Mammary epithelial cell (primary cell): ENCODE measurements at regions of chr3 and their contacts with region 1.

Region 1: GRCh38 chr3:16600780-16601539 is 4.3 kb downstream of the DAZL start:
- DNase-seq: peak; percentile 37
- H3K4me3 ChIP-seq: no peak overlapping the region
- H3K27ac ChIP-seq: no peak overlapping the region
- H3K4me1 ChIP-seq: no peaks in the 10 kb centered on the region
- H3K27me3 ChIP-seq: no peaks in the 10 kb centered on the region
- CTCF ChIP-seq: peak; percentile 73 to 76

Region 2: GRCh38 chr3:16618721-16619120 is 17.8 kb after region 1 on chr3:
- CTCF ChIA-PET with region 1: no interaction called
- dilution Hi-C with region 1: no loop called
- in situ Hi-C with region 1: no loop called
- intact Hi-C with region 1: no loop called
- DNase-seq: peak; percentile 14
- H3K4me3 ChIP-seq: no peak overlapping the region
- H3K27ac ChIP-seq: no peak overlapping the region
- H3K4me1 ChIP-seq: no peaks in the 10 kb centered on the region
- H3K27me3 ChIP-seq: peaks cover 4% of the 10 kb centered on the region
- CTCF ChIP-seq: no peak

Region 3: GRCh38 chr3:16801698-16802097 is 200.7 kb after region 1 on chr3:
- CTCF ChIA-PET with region 1: no interaction called
- dilution Hi-C with region 1: no loop called
- in situ Hi-C with region 1: no loop called
- intact Hi-C with region 1: loop called (anchors 10 kb)
- DNase-seq: no peak
- H3K4me3 ChIP-seq: no peak overlapping the region
- H3K27ac ChIP-seq: no peak overlapping the region
- H3K4me1 ChIP-seq: no peaks in the 10 kb centered on the region
- H3K27me3 ChIP-seq: no peaks in the 10 kb centered on the region
- CTCF ChIP-seq: no peak

Region 4: GRCh38 chr3:17227472-17227871 is 626.5 kb after region 1 on chr3:
- CTCF ChIA-PET with region 1: no interaction called
- dilution Hi-C with region 1: loop called (anchors 10 kb)
- in situ Hi-C with region 1: loop called (anchors 10 to 25 kb)
- intact Hi-C with region 1: no loop called
- DNase-seq: no peak
- H3K4me3 ChIP-seq: no peak overlapping the region
- H3K27ac ChIP-seq: no peak overlapping the region
- H3K4me1 ChIP-seq: no peaks in the 10 kb centered on the region
- H3K27me3 ChIP-seq: no peaks in the 10 kb centered on the region
- CTCF ChIP-seq: no peak

Region 5: GRCh38 chr3:17412950-17413530 is 812.1 kb after region 1 on chr3:
- CTCF ChIA-PET with region 1: no interaction called
- dilution Hi-C with region 1: no loop called
- in situ Hi-C with region 1: loop called (anchors 25 kb)
- intact Hi-C with region 1: loop called (anchors 1 kb)
- DNase-seq: peak; percentile 58
- H3K4me3 ChIP-seq: no peak overlapping the region
- H3K27ac ChIP-seq: no peak overlapping the region
- H3K4me1 ChIP-seq: no peaks in the 10 kb centered on the region
- H3K27me3 ChIP-seq: no peaks in the 10 kb centered on the region
- CTCF ChIP-seq: peak; percentile 78 to 80